CD4-positive, alpha-beta memory T cell (primary cell): ENCODE measurements at regions of chr6 and their contacts with region 1.

Region 1: GRCh38 chr6:26156076-26156849 is 69.0 kb downstream of the HFE start:
- DNase-seq: peak; percentile 80 to 89 (median 88)
- H3K4me3 ChIP-seq: peak overlapping the region; percentile 53 to 64
- H3K4me3 Mint-ChIP-seq: peak overlapping the region; percentile 88 to 99 (median 96)
- H3K27ac ChIP-seq: peak overlapping the region; percentile 79
- H3K27ac Mint-ChIP-seq: peak overlapping the region; percentile 91 to 98 (median 95)
- H3K4me1 ChIP-seq: peaks cover 26% of the 10 kb centered on the region
- H3K4me1 Mint-ChIP-seq: peaks cover 16 to 58% (median 26%) of the 10 kb centered on the region in 4 donors
- H3K27me3 ChIP-seq: no peaks in the 10 kb centered on the region
- H3K27me3 Mint-ChIP-seq: no peaks in the 10 kb centered on the region

Region 2: GRCh38 chr6:25472306-25472705 is 684.0 kb before region 1 on chr6:
- CTCF ChIA-PET with region 1: no interaction called
- POLR2A ChIA-PET with region 1: no interaction called
- intact Hi-C with region 1: no loop called
- DNase-seq: no peak
- H3K4me3 ChIP-seq: no peak overlapping the region
- H3K4me3 Mint-ChIP-seq: no peak overlapping the region
- H3K27ac ChIP-seq: no peak overlapping the region
- H3K27ac Mint-ChIP-seq: no peak overlapping the region
- H3K4me1 ChIP-seq: no peaks in the 10 kb centered on the region
- H3K4me1 Mint-ChIP-seq: no peaks in the 10 kb centered on the region
- H3K27me3 ChIP-seq: no peaks in the 10 kb centered on the region
- H3K27me3 Mint-ChIP-seq: no peaks in the 10 kb centered on the region

Region 3: GRCh38 chr6:26045065-26045927 is 111.0 kb before region 1 on chr6:
- CTCF ChIA-PET with region 1: interaction called, 4 read pairs
- POLR2A ChIA-PET with region 1: interaction called, 259 read pairs
- intact Hi-C with region 1: loop called (anchors 1 kb)
- DNase-seq: peak; percentile 88 to 91 (median 90)
- H3K4me3 ChIP-seq: peak overlapping the region; percentile 72 to 74
- H3K4me3 Mint-ChIP-seq: peak overlapping the region; percentile 88 to 98 (median 94)
- H3K27ac ChIP-seq: peak overlapping the region; percentile 76
- H3K27ac Mint-ChIP-seq: peak overlapping the region; percentile 93 to 99 (median 98)
- H3K4me1 ChIP-seq: peaks cover 14% of the 10 kb centered on the region
- H3K4me1 Mint-ChIP-seq: peaks cover 12 to 28% (median 20%) of the 10 kb centered on the region in 4 donors
- H3K27me3 ChIP-seq: no peaks in the 10 kb centered on the region
- H3K27me3 Mint-ChIP-seq: no peaks in the 10 kb centered on the region

Region 4: GRCh38 chr6:26141378-26141904 is 14.8 kb before region 1 on chr6:
- CTCF ChIA-PET with region 1: interaction called, 3 read pairs
- POLR2A ChIA-PET with region 1: interaction called, 48 read pairs
- intact Hi-C with region 1: no loop called
- DNase-seq: no peak
- H3K4me3 ChIP-seq: no peak overlapping the region
- H3K4me3 Mint-ChIP-seq: no peak overlapping the region
- H3K27ac ChIP-seq: no peak overlapping the region
- H3K27ac Mint-ChIP-seq: no peak overlapping the region
- H3K4me1 ChIP-seq: no peaks in the 10 kb centered on the region
- H3K4me1 Mint-ChIP-seq: peaks cover 0 to 4% (median 3%) of the 10 kb centered on the region in 4 donors
- H3K27me3 ChIP-seq: no peaks in the 10 kb centered on the region
- H3K27me3 Mint-ChIP-seq: no peaks in the 10 kb centered on the region

Region 5: DNA sequence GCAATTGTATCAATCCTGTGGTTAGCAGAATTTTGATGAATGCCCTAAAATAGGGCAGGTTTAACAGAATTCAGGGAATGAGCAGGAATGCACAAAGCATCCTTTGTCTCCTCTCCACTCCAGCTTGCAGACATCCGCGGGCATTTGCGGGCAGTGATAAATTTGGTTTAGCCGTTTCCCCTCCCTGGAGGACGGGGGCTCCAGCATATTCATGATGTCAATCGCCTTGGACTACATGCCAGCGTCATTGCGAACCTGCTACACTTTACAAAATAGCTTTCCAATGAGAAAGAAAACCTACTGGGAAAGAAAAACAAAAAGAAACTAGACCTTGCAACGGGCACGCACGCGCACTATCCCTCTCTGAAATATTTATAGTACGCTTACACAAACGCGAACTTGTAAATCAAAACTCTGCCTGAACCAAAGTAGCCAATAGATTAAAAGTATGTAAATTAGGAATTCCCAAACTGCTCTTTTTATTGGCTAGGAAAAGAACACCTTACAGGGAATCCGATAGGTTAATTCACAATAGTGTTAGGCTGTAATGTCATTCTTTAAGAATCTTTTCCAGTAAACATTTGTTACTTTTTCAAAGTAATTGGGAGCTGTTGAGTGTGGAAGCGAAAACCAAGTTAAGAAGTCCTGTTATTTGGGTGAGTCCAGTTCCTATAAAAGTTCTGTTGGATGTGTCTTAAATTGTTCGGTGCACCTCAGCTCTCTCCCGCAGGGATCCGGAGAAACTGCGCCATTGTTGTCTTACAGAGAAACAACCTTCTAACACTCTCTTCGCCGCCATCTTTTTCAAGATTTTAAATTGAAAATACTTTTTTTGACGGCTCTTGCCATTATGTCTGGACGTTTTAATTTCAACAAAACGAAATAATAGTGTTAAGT is 67.6 kb after region 1 on chr6:
- CTCF ChIA-PET with region 1: no interaction called
- POLR2A ChIA-PET with region 1: interaction called, 95 read pairs
- intact Hi-C with region 1: no loop called
- DNase-seq: peak; percentile 74 to 87 (median 84)
- H3K4me3 ChIP-seq: peak overlapping the region; percentile 45 to 82
- H3K4me3 Mint-ChIP-seq: no peak overlapping the region
- H3K27ac ChIP-seq: peak overlapping the region; percentile 69
- H3K27ac Mint-ChIP-seq: no peak overlapping the region
- H3K4me1 ChIP-seq: peaks cover 21% of the 10 kb centered on the region
- H3K4me1 Mint-ChIP-seq: peaks cover 6 to 8% (median 7%) of the 10 kb centered on the region in 4 donors
- H3K27me3 ChIP-seq: no peaks in the 10 kb centered on the region
- H3K27me3 Mint-ChIP-seq: no peaks in the 10 kb centered on the region

Region 6: GRCh38 chr6:26258200-26258977 is 102.1 kb after region 1 on chr6:
- CTCF ChIA-PET with region 1: no interaction called
- POLR2A ChIA-PET with region 1: no interaction called
- intact Hi-C with region 1: no loop called
- DNase-seq: no peak
- H3K4me3 ChIP-seq: no peak overlapping the region
- H3K4me3 Mint-ChIP-seq: no peak overlapping the region
- H3K27ac ChIP-seq: no peak overlapping the region
- H3K27ac Mint-ChIP-seq: no peak overlapping the region
- H3K4me1 ChIP-seq: peaks cover 3% of the 10 kb centered on the region
- H3K4me1 Mint-ChIP-seq: peaks cover 0 to 11% (median 2%) of the 10 kb centered on the region in 4 donors
- H3K27me3 ChIP-seq: no peaks in the 10 kb centered on the region
- H3K27me3 Mint-ChIP-seq: no peaks in the 10 kb centered on the region

Region 7: DNA sequence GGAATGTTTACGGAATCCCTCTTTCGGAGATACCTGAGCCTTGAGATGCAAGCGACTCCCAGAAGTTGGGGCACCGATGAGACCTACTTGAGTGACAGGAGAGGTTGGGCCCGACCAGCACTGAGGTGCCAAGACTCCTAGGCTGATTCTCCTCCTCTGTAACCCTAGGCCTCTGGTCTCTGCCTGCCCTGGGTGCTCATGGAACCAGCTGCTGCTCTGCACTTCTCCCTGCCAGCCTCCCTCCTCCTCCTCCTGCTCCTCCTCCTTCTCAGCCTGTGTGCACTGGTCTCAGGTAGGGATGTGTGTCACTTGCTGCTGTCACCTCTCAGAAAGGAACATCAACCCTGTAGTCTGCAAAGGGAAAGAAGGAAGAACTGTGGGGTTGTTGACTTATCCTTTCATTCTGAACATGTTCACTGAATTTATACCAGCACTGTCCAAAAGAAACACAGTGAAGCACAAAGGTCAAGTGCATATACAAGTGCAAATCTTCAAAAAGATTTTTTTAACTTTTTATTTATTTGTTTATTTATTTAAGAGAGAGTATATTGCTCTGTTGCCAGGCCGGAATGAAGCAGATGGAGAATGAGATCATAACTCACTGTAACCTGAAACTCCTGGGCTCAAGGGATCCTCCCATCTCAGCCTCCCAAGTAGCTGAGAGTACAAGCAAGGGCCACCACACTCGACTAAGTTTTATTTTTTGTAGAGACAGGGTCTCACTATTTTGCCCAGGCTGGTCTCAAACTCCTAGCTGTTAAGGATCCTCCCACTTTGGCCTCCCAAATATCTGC is 227.6 kb after region 1 on chr6:
- CTCF ChIA-PET with region 1: no interaction called
- POLR2A ChIA-PET with region 1: no interaction called
- intact Hi-C with region 1: no loop called
- DNase-seq: no peak
- H3K4me3 ChIP-seq: peak overlapping the region; percentile 80 to 85
- H3K4me3 Mint-ChIP-seq: peak overlapping the region; percentile 98 to 100 (median 99)
- H3K27ac ChIP-seq: peak overlapping the region; percentile 88
- H3K27ac Mint-ChIP-seq: peak overlapping the region; percentile 70 to 100 (median 98)
- H3K4me1 ChIP-seq: peaks cover 10% of the 10 kb centered on the region
- H3K4me1 Mint-ChIP-seq: peaks cover 18 to 36% (median 31%) of the 10 kb centered on the region in 4 donors
- H3K27me3 ChIP-seq: no peaks in the 10 kb centered on the region
- H3K27me3 Mint-ChIP-seq: no peaks in the 10 kb centered on the region

Region 8: DNA sequence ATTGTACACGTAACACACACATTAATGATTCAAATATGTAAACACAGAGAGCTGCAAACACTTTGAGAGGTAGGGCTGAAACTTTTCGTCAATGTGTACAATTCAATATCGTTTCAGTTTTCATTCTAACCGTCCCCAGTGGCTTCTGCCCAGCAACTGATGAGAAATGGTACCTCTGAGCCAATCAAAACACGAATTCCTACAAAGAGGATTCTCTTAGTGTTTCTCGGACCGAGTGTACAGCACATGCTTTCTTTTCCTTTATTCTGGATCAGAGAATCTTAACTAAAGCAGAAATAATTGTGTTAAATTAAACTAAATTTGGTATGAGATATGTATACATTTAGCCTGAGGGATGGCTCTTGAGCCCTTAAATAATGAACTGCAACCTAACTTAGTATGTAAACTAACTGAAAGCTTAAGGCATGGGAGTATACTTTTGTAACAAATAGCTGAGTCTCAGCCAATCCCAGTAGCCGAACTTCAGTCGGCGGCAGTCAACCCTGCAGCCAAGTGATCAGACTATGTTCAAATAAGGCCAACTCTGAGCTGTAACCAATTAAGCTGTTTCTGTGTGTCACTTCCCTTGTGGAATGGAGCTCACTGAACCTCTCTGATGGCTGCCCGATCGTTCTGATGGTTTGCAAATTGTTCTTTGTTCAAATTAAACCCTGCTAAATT is 317.6 kb after region 1 on chr6:
- CTCF ChIA-PET with region 1: no interaction called
- POLR2A ChIA-PET with region 1: interaction called, 20 read pairs
- intact Hi-C with region 1: no loop called
- DNase-seq: peak; percentile 91 to 94 (median 92)
- H3K4me3 ChIP-seq: peak overlapping the region; percentile 63 to 73
- H3K4me3 Mint-ChIP-seq: peak overlapping the region; percentile 84 to 99 (median 94)
- H3K27ac ChIP-seq: peak overlapping the region; percentile 81
- H3K27ac Mint-ChIP-seq: peak overlapping the region; percentile 99 to 100 (median 99)
- H3K4me1 ChIP-seq: peaks cover 52% of the 10 kb centered on the region
- H3K4me1 Mint-ChIP-seq: peaks cover 37 to 72% (median 51%) of the 10 kb centered on the region in 4 donors
- H3K27me3 ChIP-seq: no peaks in the 10 kb centered on the region
- H3K27me3 Mint-ChIP-seq: no peaks in the 10 kb centered on the region

Region 9: GRCh38 chr6:26613689-26614683 is 457.7 kb after region 1 on chr6:
- CTCF ChIA-PET with region 1: no interaction called
- POLR2A ChIA-PET with region 1: no interaction called
- intact Hi-C with region 1: no loop called
- DNase-seq: peak in 2 of 5 donors; percentile 28 to 30
- H3K4me3 ChIP-seq: peak overlapping the region in 1 of 2 donors; percentile 30
- H3K4me3 Mint-ChIP-seq: peak overlapping the region; percentile 77 to 90 (median 82)
- H3K27ac ChIP-seq: no peak overlapping the region
- H3K27ac Mint-ChIP-seq: peak overlapping the region in 5 of 7 donors; percentile 29 to 86 (median 66)
- H3K4me1 ChIP-seq: peaks cover 13% of the 10 kb centered on the region
- H3K4me1 Mint-ChIP-seq: peaks cover 0 to 30% (median 14%) of the 10 kb centered on the region in 4 donors
- H3K27me3 ChIP-seq: peaks cover 19% of the 10 kb centered on the region
- H3K27me3 Mint-ChIP-seq: peaks cover 16 to 31% of the 10 kb centered on the region in 2 donors

Region 10: DNA sequence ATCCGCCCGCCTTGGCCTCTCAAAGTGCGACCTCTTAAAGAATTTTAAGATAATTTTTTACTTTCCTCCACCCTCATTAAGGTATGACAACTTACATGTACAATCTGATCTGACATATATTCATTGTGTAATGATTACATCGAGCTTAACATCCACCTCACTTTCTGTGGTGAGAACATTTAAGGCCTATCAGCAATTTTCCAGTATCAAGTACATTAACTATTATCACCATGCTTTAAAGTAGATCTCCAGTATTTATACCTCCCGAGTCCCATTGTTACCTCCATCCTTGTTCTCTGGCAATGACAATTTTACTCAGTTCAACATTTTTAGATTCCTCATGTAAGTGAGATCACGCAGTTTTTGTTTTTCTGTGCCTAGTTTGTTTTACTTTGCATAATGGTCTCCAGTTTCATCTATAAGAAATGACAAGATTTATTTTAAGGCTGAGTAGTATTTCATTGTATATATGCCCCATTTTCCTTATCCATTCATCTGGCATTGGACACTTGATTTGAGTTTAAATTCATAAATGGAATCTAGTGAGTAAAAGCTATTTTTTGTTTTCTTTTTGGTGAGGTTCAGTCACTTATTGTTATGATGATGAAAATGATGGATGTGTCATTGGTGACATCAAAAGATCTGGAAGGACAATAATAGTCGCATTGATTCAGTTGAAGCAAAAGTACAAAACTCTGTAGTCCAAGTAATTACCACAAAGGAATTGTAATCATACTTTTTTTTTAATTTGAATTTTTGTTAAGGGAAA is 1668.9 kb after region 1 on chr6:
- CTCF ChIA-PET with region 1: no interaction called
- POLR2A ChIA-PET with region 1: interaction called, 25 read pairs
- intact Hi-C with region 1: no loop called
- DNase-seq: no peak
- H3K4me3 ChIP-seq: peak overlapping the region; percentile 62 to 79
- H3K4me3 Mint-ChIP-seq: peak overlapping the region; percentile 88 to 98 (median 92)
- H3K27ac ChIP-seq: peak overlapping the region; percentile 66
- H3K27ac Mint-ChIP-seq: peak overlapping the region; percentile 91 to 100 (median 98)
- H3K4me1 ChIP-seq: peaks cover 29% of the 10 kb centered on the region
- H3K4me1 Mint-ChIP-seq: peaks cover 16 to 43% (median 31%) of the 10 kb centered on the region in 4 donors
- H3K27me3 ChIP-seq: no peaks in the 10 kb centered on the region
- H3K27me3 Mint-ChIP-seq: no peaks in the 10 kb centered on the region